Activated B cell treated with CpG ODN at 0.5 μM for 24 hours (primary cell): ENCODE measurements at regions of chr4 and their contacts with region 1.

Region 1: DNA sequence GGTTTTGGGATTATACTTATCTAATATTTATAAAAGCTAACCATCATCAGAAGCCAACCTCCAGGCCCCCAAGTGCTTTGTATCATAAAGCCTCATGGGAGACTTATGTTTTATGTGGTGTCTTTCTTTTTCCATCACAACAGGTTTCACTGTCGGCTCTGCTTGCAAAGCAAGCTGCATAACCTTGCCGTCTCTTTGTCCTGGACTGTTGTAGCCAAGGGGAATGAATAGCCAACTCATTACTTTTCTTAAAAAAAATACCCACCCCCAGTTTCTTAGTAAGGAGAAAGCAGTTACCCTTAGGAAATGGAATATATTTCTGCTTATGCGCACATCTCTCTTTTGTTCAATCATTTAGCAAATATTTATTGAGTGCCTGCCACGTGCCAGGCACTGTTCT is 40.7 kb downstream of the FAM184B start:
- DNase-seq: no peak
- ATAC-seq: no peak
- H3K4me3 Mint-ChIP-seq: no peak overlapping the region
- H3K27ac Mint-ChIP-seq: no peak overlapping the region
- H3K4me1 Mint-ChIP-seq: no peaks in the 10 kb centered on the region
- H3K27me3 Mint-ChIP-seq: peaks cover 3% of the 10 kb centered on the region
- CTCF ChIP-seq: no peak

Region 2: DNA sequence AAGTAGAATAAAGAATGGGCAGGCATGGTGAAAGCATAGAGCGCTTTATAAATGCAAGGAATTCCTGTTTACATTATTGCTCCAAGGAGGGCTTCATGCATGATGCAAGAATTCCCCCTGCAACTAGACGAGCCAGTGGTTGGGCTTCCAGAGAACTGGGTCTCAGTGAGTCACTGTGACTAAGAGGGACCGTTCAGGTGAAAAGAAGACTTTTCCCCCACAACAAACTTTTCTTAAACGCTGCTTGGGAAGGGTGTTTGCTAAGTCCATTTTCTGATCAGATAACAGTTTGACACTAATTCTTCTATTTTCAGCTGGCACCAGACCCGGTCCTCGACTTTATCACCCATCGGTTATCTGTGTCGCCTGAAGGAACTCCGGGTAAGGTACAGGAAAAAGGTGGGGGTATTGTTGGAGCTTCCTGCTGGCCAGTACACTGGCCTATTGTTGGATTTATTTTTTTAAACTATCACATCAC is 882.4 kb before region 1 on chr4:
- CTCF ChIA-PET with region 1: no interaction called
- POLR2A ChIA-PET with region 1: no interaction called
- intact Hi-C with region 1: loop called (anchors 10 kb)
- DNase-seq: no peak
- ATAC-seq: no peak
- H3K4me3 Mint-ChIP-seq: no peak overlapping the region
- H3K27ac Mint-ChIP-seq: no peak overlapping the region
- H3K4me1 Mint-ChIP-seq: no peaks in the 10 kb centered on the region
- H3K27me3 Mint-ChIP-seq: no peaks in the 10 kb centered on the region
- CTCF ChIP-seq: no peak

Region 3: DNA sequence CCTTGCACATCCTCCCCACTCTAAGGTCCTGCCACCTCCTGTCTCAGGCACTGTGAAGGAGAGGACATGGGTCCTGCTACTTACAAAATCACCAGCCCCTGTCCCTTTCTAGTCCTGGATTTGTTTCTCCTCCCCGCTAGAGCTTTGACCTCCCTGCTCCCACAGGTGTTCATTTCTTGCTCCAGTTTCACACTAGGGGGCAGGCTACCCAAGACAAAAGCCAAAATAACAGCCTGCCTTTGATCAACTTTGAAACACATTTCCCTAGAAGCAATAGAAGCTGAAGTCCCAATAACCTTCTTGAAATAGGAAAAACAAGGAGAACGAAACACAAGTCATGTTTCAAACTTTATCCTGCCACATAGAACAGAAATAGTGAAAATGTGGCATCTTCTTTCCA is 393.3 kb before region 1 on chr4:
- CTCF ChIA-PET with region 1: no interaction called
- POLR2A ChIA-PET with region 1: no interaction called
- intact Hi-C with region 1: no loop called
- DNase-seq: no peak
- ATAC-seq: no peak
- H3K4me3 Mint-ChIP-seq: no peak overlapping the region
- H3K27ac Mint-ChIP-seq: no peak overlapping the region
- H3K4me1 Mint-ChIP-seq: no peaks in the 10 kb centered on the region
- H3K27me3 Mint-ChIP-seq: no peaks in the 10 kb centered on the region
- CTCF ChIP-seq: no peak